ENCODE measurements at regions of chr11 and their contacts with region 1.

Region 1: DNA sequence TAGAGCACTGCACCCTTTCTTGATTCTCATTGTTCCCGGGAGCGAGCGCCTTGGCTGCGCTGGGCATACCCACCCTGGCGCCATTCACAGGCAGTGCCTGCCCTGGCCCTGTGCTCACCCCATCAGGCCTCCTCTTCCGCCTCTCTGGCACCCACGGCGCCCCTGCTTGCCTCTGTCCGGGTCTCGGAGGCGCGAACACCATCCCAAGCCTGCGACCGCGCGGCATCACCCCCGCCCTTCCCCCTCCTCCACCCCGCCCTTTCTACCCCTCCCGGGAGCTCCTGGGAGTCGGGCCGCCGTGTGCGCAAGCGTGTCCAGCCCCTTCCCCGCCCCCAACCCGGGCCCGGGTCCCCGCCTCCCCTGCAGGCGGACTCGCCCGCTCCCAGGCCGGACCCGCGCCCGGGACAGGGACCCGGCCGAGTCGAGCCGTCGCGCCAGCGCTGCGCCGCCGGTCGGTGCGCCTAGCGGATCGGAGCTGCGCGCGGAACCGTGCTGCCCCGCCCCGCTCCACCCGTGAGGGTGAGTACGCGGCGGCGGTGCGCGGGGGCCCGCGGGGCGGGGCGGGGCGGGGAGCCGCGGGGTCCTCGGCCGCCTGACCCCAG is at the start of gene ST3GAL4:
- DNase-seq: peak; percentile 76 to 96 (median 82)

Region 2: GRCh38 chr11:125772834-125773505 is 582.5 kb before region 1 on chr11:
- intact Hi-C with region 1: no loop called
- DNase-seq: no peak

Region 3: DNA sequence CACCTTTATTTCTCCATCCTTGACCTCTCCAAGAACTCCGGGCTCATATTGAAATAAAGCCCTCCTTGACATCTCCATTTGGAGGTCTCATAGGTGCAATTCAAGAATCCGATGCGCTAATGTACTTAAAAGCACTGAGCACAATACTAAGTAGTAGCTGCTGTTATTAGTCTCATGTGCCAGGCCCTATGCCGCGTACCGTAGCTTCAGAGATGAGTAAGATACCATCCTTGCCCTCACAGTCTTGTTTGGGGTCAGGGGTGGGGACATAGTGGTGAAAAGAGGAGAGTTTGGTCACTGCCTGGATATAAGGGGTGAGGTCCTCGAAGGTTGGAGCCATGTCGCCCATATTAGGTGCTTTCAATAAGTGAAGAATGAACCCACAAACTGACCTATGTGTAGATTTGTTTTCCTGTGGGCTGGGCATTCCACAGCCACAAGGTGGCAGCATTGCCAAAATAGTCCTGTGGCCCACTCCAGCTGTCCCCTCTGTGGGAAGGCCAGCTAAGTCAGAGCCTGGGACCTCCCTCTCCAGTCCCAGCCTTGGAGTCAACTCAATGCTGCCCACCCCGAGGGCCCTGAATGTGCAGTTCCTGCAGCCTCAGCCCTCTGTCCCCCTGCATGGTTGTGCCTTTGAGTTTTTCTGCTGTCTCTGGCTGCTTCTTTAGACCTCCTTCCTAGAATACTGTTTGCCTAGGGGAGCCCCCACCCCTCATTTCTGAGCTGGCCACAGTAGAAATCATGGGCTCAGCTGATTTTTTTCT is 45.0 kb before region 1 on chr11:
- intact Hi-C with region 1: loop called (anchors 5 kb)
- DNase-seq: peak; percentile 62 to 97 (median 82)

Region 4: DNA sequence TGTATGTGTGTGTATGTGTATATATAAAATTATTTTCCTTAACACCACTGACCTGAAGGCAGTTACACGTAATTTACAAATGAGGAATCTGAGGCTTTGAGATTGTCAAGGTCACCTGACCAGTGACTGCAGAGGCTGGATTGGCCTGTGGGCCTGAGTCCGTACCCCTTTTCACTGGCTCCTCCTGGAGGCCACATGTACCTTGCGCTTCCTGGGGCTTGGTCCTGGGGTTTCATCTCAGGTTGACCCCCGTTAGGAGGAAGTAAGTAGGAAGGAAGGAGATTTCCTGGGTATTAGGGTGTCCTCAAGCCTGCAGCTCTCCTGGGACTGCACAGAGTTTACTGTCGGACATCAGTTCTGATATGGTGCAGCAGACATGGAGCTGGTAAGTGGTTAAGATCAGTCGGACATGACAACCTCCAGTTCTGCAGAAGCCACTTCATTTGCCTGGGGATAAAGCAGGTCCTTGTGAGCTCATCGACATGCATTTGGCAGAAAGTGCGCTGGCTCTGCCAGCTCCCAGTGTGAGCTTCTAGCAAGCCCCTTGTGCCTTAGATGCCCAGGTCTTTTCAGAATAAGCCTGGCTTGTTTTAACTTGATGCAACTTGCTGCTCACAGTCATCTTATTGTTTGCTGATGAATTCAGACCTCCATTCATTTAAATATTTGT is 36.7 kb after region 1 on chr11:
- intact Hi-C with region 1: loop called (anchors 5 kb)
- DNase-seq: peak in 5 of 10 donors; percentile 26 to 90 (median 42)

Region 5: GRCh38 chr11:126416542-126417090 is 61.2 kb after region 1 on chr11:
- intact Hi-C with region 1: loop called (anchors 5 kb)
- DNase-seq: peak; percentile 81 to 97 (median 91)

Measured in posterior cingulate gyrus (tissue), 11 donors.